ENCODE measurements at regions of chr12 and their contacts with region 1.

Region 1: DNA sequence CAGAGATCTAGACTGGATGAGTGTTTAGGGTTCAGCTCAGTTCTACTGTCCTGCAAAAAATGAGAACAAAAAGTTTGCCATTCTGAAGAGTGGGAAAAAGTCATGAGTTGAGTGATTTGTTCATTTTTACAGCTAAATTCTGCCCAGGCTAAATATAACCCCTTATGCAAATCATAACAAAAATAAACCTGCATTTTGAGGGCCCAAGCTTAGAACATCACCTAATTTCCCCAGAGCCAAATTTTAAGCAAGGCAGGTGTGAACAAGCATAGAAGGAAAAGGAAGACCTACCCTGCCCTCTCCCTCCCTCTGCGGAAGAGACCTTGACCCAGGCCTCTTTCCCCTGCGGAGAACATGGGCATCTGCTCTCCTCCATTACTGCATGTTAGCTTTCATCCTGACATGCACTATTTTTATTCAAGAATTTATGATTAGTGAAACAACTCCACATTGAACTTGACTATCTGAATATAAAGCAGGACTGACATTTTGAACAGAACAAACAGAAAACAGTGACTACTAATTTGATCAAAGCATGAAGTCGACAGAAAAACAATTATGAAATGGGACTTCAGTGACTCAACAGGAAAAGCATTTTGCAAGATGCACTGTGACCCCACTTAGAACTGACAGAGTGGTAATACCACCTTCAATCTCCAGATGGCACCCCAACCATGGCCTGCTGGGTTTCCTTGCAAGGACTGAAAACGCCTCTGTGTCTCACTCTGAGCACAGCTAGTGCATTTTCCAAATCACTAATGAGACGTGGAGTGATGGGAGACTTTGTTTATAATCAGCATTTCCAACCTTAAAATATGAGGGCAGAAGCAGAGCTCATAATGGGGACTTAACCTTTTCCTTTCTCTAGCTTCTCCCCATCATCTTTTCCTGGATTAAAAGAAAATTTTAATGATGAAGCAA is 30.9 kb upstream of the SELPLG start:
- DNase-seq: peak; percentile 84 to 96
- H3K4me3 ChIP-seq: no peak overlapping the region
- H3K27ac ChIP-seq: peak overlapping the region in 4 of 5 donors; percentile 77 to 91 (median 88)
- H3K4me1 ChIP-seq: peaks cover 21 to 61% (median 43%) of the 10 kb centered on the region in 4 donors
- H3K27me3 ChIP-seq: no peaks in the 10 kb centered on the region
- CTCF ChIP-seq: peak in 6 of 7 experiments; percentile 62 to 98 (median 92)
- EP300 ChIP-seq: no peak
- POLR2A ChIP-seq: no peak

Region 2: DNA sequence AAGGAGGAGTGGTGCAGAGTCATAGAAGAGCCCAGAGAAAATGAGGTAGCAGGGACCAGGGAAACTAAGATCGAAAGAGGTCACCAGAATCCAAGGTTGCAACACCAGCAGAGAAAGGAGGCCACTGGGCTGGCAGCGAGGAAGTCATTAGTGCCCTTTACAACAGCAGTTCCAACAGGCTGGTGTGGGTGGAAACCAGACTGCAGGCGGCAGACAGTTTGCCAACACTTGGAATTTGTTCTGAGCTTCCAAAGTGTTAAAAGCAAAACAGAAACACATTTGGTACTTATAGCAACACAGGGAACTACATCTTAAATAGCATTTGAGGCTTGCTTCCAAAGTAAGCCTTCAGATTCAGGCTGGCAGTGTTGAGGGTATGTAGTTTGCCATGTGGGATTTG is 1074.2 kb before region 1 on chr12:
- intact Hi-C with region 1: no loop called
- DNase-seq: no peak
- H3K4me3 ChIP-seq: no peak overlapping the region
- H3K27ac ChIP-seq: no peak overlapping the region
- H3K4me1 ChIP-seq: no peaks in the 10 kb centered on the region
- H3K27me3 ChIP-seq: peaks cover 0 to 14% (median 0%) of the 10 kb centered on the region in 3 donors
- CTCF ChIP-seq: no peak
- EP300 ChIP-seq: no peak
- POLR2A ChIP-seq: no peak

Region 3: DNA sequence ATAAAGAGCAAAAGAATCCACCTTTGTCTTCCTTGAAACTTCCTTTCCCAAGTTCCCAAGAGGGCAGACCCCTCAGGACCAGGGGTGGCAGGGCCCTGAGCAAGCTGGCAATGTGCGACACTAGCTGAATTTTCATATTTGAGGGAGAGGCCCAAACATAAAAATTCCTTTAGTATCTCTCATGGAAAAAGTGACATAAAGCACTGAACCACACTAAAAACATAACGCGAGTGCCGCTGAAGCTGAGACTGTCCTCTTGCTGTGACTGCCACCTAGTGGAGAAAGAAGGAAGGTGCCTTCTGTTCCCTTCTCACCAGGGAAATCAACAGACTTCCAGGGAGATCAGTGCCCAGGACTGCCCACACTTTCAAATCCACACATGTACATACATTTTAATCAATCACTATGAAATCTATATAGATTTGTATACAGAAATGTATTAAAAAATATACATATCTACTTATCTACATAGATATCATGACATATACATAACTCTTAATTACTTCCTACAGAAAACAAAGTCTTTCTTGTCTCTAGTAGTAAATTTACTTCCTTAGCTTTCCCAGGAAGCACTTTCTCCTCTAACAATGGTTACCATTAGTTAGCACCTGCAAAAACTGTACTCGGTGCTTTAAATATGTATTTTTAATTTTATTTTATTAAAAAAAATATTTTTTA is 139.0 kb after region 1 on chr12:
- intact Hi-C with region 1: loop called (anchors 5 kb)
- DNase-seq: peak; percentile 80 to 95
- H3K4me3 ChIP-seq: no peak overlapping the region
- H3K27ac ChIP-seq: peak overlapping the region in 4 of 5 donors; percentile 80 to 87 (median 86)
- H3K4me1 ChIP-seq: peaks cover 0 to 74% (median 44%) of the 10 kb centered on the region in 4 donors
- H3K27me3 ChIP-seq: no peaks in the 10 kb centered on the region
- CTCF ChIP-seq: peak in 6 of 7 experiments; percentile 92 to 97 (median 94)
- EP300 ChIP-seq: no peak
- POLR2A ChIP-seq: no peak